ENCODE measurements at regions of chr11 and their contacts with region 1.

Region 1: DNA sequence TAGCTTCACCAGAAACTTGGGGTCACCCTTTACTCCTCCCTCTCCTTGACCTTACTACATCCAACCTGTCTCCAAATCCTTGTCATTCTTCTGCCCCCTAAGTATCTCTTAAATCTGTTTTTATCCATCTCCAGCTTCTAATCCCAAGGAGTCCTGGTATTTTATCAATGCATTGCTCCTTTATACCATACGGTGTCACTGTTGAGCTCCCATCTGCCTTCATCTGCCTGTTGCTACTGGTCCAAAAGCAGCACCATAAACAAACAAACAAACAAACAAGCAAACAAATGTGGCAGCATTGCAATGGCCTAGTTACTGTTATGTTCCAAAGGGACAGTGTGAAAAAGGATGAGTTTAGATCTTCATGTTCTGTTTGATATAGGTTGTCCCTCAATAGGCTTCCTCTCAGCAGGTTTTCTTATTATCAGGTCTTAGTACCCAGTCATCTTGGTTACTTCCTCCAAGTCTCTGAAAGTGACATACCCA is 34.2 kb downstream of the DNHD1 start:
- DNase-seq: peak; percentile 80
- ATAC-seq: peak; percentile 84
- H3K4me3 ChIP-seq: no peak overlapping the region
- H3K27ac ChIP-seq: no peak overlapping the region
- H3K4me1 ChIP-seq: no peaks in the 10 kb centered on the region
- H3K27me3 ChIP-seq: no peaks in the 10 kb centered on the region
- CTCF ChIP-seq: peak; percentile 94

Region 2: DNA sequence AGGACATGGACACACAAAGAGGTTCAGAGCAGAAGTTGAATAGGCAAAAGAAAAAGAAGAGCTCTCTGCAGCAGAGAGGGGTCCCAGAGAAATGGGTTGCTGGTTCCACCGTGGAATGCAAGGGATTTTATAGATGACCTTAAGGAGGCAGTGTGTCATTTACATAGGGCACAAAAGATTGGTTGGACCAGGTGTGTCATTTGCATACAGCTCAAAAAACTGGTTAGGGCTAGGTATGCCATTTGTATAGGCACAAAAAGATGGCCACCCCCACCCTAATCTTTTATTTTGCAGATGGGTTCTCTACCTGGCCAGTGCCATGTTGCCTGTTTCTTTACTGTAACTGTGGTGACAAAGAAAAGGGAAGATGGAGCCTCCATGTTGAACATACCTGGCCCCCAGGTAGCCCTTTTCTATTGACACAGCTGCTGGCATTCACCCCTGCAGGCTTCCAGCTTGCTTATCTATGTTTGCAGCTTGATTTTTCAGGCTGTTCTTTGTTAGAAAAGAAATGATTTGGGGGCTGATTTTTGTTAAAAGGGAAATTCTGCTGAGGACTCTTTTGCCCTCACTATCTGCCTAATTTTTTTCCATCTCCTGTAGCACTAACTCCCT is 207.9 kb before region 1 on chr11:
- CTCF ChIA-PET with region 1: no interaction called
- POLR2A ChIA-PET with region 1: no interaction called
- in situ Hi-C with region 1: no loop called
- intact Hi-C with region 1: no loop called
- DNase-seq: no peak
- ATAC-seq: no peak
- H3K4me3 ChIP-seq: no peak overlapping the region
- H3K27ac ChIP-seq: no peak overlapping the region
- H3K4me1 ChIP-seq: peaks cover 15% of the 10 kb centered on the region
- H3K27me3 ChIP-seq: no peaks in the 10 kb centered on the region
- CTCF ChIP-seq: 0 out of 2 replicates have a peak, but pooled peaks have one; percentile 20

Region 3: DNA sequence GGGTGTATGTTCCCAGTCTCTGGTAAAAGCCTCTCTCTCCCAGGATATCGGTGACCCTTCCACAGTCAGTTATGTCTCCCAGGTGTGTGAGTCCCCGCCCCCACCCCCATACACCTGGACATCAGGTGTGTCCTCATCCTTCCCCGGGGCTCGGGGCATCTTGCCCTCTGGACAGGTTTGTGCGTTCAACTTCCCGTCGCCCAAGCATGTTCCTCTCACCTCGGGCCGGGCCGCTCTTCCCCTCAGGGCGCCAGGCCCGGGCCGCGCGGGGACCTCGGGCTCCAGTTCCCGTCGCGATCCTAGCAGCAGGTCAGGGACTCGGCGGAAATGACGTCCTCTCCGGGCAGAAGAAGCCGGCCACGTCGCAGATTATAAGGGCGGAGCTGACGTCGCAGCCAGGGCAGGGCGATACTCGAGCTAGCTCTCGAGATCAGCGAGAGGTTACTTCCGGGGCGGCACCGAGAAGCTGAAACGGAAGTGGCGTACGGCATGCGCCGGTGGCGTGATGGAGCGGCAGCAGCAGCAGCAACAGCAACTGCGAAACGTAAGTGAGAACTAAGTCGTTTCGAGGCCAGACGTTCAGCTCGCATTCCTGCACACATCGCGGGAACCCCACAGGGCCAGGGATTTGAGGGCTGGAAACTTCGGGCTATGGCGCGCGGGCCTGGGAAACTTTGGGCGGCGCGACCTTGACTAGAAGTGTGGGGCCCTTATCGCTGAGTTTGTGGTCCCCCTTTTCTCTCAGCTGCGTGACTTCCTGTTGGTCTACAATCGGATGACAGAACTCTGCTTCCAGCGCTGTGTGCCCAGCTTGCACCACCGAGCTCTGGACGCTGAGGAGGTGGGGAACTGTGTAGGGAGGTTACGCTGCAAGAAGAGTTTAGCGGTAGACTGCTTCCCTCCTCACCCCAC is 50.0 kb before region 1 on chr11 and contains the starts of genes ARFIP2 and TIMM10B:
- CTCF ChIA-PET with region 1: no interaction called
- POLR2A ChIA-PET with region 1: no interaction called
- in situ Hi-C with region 1: no loop called
- intact Hi-C with region 1: no loop called
- DNase-seq: peak; percentile 94
- ATAC-seq: peak; percentile 99
- H3K4me3 ChIP-seq: peak within 1 kb of the TSS; percentile 76 to 98
- H3K27ac ChIP-seq: peak within 1 kb of the TSS; percentile 92
- H3K4me1 ChIP-seq: peaks cover 20% of the 10 kb centered on the region
- H3K27me3 ChIP-seq: no peaks in the 10 kb centered on the region
- CTCF ChIP-seq: no peak
- total RNA-seq, gene ARFIP2: 116 TPM
- total RNA-seq, gene TIMM10B: 63.8 TPM

Region 4: DNA sequence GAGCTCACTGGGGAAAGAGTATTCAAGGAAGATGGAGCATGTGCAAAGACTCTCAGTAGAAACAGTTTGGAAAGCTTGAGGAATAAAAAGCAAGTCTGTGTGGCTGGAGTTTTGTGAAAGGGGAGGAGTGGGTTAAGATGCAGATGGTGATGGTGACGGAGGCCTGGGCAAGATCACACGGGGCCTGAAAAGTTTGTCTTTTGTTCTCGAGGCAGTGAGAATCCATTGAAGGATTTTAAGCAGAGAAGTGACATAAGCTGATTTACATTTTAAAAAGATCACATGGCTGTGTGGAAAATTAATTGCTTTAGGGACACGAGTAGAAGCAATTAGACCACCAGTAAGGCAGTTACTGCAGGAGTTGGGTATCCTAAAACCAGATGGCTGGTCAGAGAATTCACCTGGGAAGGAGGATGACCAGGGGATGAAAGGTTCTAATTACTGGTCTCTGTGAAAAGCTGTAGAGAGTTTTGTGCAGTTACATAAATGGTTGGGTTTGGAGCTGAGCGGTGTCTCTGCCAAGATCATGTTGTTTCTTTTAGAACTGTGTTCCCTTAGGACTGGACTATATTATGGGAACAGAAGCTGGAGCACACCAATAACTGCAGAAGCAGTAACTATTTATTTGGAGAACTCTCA is 65.0 kb after region 1 on chr11:
- CTCF ChIA-PET with region 1: no interaction called
- POLR2A ChIA-PET with region 1: no interaction called
- in situ Hi-C with region 1: no loop called
- intact Hi-C with region 1: loop called (anchors 5 kb)
- DNase-seq: no peak
- ATAC-seq: no peak
- H3K4me3 ChIP-seq: no peak overlapping the region
- H3K27ac ChIP-seq: no peak overlapping the region
- H3K4me1 ChIP-seq: no peaks in the 10 kb centered on the region
- H3K27me3 ChIP-seq: no peaks in the 10 kb centered on the region
- CTCF ChIP-seq: no peak

Region 5: DNA sequence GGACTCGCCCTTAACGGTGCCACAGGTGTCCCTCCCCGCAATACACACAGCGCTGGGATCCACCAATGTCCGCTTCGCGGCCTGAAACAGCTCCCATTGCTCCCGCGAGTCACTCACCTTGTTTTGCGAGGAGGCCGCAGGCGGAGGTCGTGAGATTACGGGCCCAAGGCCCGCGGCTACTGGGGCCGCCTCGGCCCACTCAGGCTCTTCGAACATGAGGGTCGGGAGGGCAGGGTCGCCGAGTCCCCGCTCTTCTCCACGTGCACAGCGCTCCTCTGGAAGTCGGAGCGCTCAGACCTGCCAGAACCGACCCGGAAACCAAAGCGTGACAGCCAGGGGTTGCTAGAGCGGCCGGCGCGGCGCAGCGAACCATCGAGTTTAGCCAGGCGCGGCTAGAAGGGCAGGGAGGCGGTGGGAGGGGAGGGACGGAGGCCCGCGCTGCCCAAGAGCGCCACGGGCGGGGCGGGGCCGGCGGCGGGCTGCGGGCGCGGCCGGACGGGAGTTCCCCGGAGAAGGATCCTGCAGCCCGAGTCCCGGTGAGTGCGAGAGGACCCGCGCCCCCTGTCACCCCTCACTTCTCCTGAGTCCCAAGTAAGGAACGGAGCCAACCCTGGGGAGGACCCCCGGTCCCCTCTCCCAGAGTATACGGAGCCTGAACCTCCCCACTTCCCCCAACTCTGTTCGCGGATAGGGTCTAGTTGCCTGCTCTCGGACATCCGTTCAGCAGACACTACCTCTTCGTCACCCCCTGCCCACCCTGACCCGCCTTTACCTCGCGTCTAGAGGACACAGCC is 72.2 kb after region 1 on chr11 and contains the starts of genes ILK and RRP8:
- CTCF ChIA-PET with region 1: interaction called, 12 read pairs
- POLR2A ChIA-PET with region 1: no interaction called
- in situ Hi-C with region 1: no loop called
- intact Hi-C with region 1: loop called (anchors 5 kb)
- DNase-seq: no peak
- ATAC-seq: peak; percentile 93
- H3K4me3 ChIP-seq: peak within 1 kb of the TSS; percentile 95 to 98
- H3K27ac ChIP-seq: peak within 1 kb of the TSS; percentile 98
- H3K4me1 ChIP-seq: peaks cover 46% of the 10 kb centered on the region
- H3K27me3 ChIP-seq: no peaks in the 10 kb centered on the region
- CTCF ChIP-seq: no peak; the same call in 1 of the 2 replicates
- total RNA-seq, gene ILK: 204 TPM
- total RNA-seq, gene RRP8: 23.1 TPM

Region 6: GRCh38 chr11:6705905-6706535 is 174.7 kb after region 1 on chr11:
- CTCF ChIA-PET with region 1: interaction called, 10 read pairs
- POLR2A ChIA-PET with region 1: no interaction called
- in situ Hi-C with region 1: no loop called
- intact Hi-C with region 1: loop called (anchors 5 kb)
- DNase-seq: no peak
- ATAC-seq: peak; percentile 69
- H3K4me3 ChIP-seq: no peak overlapping the region
- H3K27ac ChIP-seq: no peak overlapping the region
- H3K4me1 ChIP-seq: no peaks in the 10 kb centered on the region
- H3K27me3 ChIP-seq: 0 out of 2 replicates have a peak, but pooled peaks cover 2% of the 10 kb centered on the region
- CTCF ChIP-seq: peak; percentile 98

Measured in Panc1 (cell line).